Activated CD4-positive, alpha-beta T cell treated with anti-CD3 and anti-CD28 coated beads for 36 hours (primary cell): ENCODE measurements at regions of chr4 and their contacts with region 1.

Region 1: DNA sequence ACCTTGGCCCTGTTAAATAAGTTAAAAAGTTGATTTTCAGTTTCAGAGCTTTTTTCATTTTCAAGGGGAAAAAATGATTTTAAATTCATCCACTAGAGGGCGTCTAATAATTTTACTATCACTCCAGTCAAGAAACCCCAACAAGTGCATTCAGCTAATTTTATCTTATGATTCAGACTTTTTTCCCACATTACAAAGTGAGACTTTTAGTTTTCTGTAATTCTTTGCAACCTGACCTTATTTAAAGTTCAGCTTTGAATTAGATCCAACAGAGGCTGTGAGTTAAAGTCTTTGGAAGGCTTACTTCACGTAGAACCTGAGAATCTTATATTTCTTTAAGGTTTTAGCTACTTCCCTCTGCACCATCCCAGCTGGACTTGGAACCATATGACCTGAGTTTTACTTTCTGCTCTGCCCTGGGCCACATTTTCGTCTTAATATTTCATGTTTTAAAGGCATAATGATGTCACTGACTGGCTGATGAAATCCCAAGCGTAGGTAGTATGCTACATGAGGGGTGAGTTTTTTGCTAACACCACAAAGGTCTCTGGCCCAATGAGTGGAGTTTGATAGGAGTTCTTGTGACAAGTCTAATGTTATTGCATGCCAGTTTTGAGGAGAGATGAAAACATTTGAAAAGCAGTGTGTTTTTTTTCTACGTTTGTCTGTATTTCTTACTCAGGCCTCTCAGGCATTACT is 7.2 kb downstream of the GNRHR start:
- DNase-seq: no peak
- ATAC-seq: peak; percentile 78
- H3K4me3 Mint-ChIP-seq: peak overlapping the region; percentile 5
- H3K27ac Mint-ChIP-seq: peak overlapping the region; percentile 77
- H3K4me1 Mint-ChIP-seq: peaks cover 11% of the 10 kb centered on the region
- H3K27me3 Mint-ChIP-seq: no peaks in the 10 kb centered on the region

Region 2: GRCh38 chr4:67727124-67727850 is 19.7 kb before region 1 on chr4:
- CTCF ChIA-PET with region 1: interaction called, 15 read pairs
- POLR2A ChIA-PET with region 1: no interaction called
- intact Hi-C with region 1: no loop called
- DNase-seq: no peak
- ATAC-seq: peak; percentile 58
- H3K4me3 Mint-ChIP-seq: no peak overlapping the region
- H3K27ac Mint-ChIP-seq: no peak overlapping the region
- H3K4me1 Mint-ChIP-seq: peaks cover 8% of the 10 kb centered on the region
- H3K27me3 Mint-ChIP-seq: no peaks in the 10 kb centered on the region

Region 3: DNA sequence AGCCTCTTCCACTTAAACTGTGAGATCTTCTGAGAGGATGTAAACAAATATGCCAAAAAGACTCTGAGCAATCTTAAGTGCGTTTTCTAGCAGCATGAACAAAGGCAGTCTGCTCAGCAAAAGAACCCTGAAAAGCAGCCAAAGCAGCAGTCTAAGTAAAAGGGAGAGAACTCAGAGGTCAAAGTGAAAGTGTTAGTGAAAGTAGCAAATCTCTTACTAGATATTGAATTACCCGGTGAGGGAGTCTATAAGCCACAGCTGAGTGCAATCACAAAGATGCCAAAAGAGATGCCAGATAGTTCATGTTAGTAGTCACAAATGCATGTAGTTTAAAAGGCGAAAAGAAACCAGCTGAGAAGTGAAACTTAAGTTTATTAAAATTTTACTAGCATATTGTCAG is 15.1 kb after region 1 on chr4:
- CTCF ChIA-PET with region 1: interaction called, 24 read pairs
- POLR2A ChIA-PET with region 1: no interaction called
- intact Hi-C with region 1: no loop called
- DNase-seq: no peak
- ATAC-seq: peak; percentile 88
- H3K4me3 Mint-ChIP-seq: no peak overlapping the region
- H3K27ac Mint-ChIP-seq: no peak overlapping the region
- H3K4me1 Mint-ChIP-seq: peaks cover 5% of the 10 kb centered on the region
- H3K27me3 Mint-ChIP-seq: no peaks in the 10 kb centered on the region

Region 4: DNA sequence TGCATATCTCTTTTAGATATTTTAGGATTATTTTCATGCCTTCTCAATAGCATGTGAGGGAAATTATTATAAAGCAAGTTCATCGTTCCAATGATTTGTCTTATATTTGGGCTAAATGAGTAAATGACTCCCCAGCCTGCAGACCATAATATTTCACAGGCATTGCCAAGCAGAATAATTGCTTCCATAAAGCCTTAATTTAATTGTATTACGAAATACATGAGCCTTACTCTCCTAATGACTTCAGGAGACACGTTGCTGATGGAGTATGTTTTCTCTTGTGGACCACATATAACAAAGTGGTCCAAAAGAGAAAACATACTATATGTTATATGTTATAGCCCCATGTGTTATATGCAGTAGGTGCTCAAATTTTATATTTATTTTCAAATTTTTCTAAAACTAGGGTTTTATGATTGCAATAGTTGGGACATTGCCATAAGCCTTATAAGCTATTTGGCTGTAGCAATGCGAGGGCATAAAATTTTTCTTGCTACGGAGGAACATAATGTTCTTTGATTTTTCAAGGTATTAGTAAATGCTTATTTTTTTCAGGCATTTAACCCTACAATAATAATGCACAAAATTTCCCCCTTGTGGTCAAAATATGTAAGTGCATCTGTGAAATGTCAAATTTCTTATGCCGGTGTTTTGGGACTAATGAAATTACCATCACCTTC is 163.1 kb after region 1 on chr4:
- CTCF ChIA-PET with region 1: interaction called, 12 read pairs
- POLR2A ChIA-PET with region 1: no interaction called
- intact Hi-C with region 1: loop called (anchors 2 to 5 kb)
- DNase-seq: no peak
- ATAC-seq: no peak
- H3K4me3 Mint-ChIP-seq: no peak overlapping the region
- H3K27ac Mint-ChIP-seq: no peak overlapping the region
- H3K4me1 Mint-ChIP-seq: no peaks in the 10 kb centered on the region
- H3K27me3 Mint-ChIP-seq: peaks cover 9% of the 10 kb centered on the region